Activated CD4-positive, alpha-beta memory T cell treated with anti-CD3 and anti-CD28 coated beads, Interleukin-2, amount 10 ng/mL, durations not matched to agents 7 days and 5 days (primary cell): ENCODE measurements at regions of chr15 and their contacts with region 1.

Region 1: DNA sequence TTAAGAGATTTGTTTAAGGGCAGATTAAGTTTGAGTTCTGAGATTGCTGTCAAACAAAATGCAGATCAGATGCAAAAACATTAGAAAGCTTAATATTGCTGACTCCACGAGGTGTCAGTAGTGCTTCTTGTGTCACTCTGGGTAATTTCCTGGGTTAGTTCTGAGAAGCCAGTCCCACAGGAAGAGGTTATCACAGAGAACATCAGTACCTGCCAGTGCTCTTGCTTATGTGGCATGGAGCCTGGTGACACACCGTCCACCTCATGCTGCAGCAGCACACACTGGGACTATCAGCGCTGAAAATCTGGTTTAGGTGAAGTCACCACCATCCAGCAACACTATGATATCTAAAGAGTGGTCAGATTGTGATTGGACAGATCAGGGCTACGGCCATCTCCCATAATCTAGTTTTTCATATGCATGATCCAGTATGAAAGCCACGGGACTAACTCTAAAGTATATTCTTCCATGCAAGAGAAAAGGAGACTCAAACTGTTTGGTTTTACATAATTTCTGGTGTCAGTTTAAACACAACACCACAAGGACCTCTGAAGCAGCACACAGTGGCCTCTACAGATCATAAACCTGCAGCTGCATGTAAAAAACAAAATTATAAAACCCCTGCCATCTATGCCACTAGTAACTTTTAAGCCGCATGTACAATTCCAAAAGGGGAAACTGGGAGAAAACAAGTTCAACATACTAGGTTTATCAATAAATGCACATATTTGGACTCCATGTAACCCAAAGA is 36.1 kb upstream of the MYO5C start:
- DNase-seq: peak; percentile 78
- H3K4me3 Mint-ChIP-seq: peak overlapping the region; percentile 19
- H3K27ac Mint-ChIP-seq: peak overlapping the region; percentile 79
- H3K4me1 Mint-ChIP-seq: peaks cover 45% of the 10 kb centered on the region
- H3K27me3 Mint-ChIP-seq: no peaks in the 10 kb centered on the region

Region 2: DNA sequence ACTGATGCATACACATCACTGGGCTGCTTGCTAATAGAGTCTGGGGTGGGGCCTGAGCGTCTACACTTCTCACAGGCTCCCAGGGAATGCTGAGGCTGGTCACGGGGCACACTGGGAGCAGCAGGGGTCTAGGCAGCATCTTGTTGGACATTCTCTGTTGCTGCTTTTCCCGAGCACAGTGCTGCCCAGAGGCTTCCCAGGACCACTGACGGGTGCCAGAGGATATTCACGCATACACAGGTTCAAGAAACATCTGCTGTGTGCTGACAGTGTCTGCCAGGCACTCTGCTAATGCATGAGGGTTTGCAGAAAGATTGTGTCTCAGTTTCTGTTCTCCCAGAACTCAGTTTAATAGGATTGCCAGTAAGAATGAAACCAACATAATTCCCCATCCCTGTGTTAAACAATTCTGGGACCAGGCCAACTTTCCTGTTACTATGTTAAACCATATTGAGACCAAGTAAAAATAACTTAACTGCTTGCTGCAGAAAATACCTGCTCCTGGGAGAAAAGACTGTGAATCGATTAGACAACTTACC is 195.2 kb before region 1 on chr15:
- CTCF ChIA-PET with region 1: no interaction called
- POLR2A ChIA-PET with region 1: no interaction called
- DNase-seq: no peak
- H3K4me3 Mint-ChIP-seq: no peak overlapping the region
- H3K27ac Mint-ChIP-seq: no peak overlapping the region
- H3K4me1 Mint-ChIP-seq: peaks cover 20% of the 10 kb centered on the region
- H3K27me3 Mint-ChIP-seq: no peaks in the 10 kb centered on the region

Region 3: GRCh38 chr15:52261498-52262242 is 70.0 kb before region 1 on chr15:
- CTCF ChIA-PET with region 1: interaction called, 47 read pairs
- POLR2A ChIA-PET with region 1: interaction called, 7 read pairs
- DNase-seq: peak; percentile 82
- H3K4me3 Mint-ChIP-seq: no peak overlapping the region
- H3K27ac Mint-ChIP-seq: peak overlapping the region; percentile 89
- H3K4me1 Mint-ChIP-seq: peaks cover 60% of the 10 kb centered on the region
- H3K27me3 Mint-ChIP-seq: no peaks in the 10 kb centered on the region

Region 4: DNA sequence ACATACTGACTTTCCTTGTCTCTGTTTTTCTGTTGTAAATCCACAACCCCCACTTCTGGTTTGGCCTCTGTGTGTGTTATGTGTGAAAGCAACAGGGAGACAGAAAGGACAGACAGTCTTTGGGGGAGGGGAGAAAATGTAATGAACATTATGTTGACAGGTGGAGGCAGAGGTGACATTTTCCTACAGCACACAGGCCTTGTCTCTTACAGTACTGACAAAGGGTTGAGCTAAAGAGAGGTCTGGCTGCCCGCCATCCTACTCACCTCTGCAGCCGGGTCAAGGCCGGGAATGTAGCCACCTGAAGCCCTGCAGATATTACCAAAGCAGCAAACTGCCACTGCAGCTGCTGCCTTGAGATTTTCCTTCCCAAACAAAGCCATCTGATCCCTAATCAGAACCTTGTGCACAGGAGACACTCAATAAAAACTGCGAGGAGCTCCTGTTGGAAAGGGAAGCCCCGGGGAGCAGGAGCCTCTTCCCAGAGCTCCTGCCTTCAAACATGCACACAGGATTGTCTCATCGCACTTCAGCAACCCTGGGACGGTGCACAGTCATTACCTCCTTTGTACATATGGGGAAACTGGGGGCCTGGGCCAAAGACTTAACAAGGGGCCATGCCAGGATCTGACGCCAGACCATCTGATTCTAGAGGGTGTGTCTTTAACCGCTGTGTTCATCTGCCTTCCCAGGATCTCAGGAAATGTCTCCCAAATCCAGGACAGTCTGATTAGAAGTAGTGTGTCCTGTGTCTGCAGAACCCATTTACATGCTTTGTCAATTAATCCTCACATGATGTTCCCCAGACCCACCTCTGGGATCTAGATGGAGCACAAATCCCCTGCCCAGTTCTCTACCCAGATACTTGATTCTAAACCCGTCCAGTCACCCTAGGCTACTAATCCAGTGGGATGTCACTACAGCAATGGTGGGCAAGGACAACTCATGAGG is 50.3 kb before region 1 on chr15:
- CTCF ChIA-PET with region 1: no interaction called
- POLR2A ChIA-PET with region 1: no interaction called
- DNase-seq: no peak
- H3K4me3 Mint-ChIP-seq: no peak overlapping the region
- H3K27ac Mint-ChIP-seq: no peak overlapping the region
- H3K4me1 Mint-ChIP-seq: peaks cover 4% of the 10 kb centered on the region
- H3K27me3 Mint-ChIP-seq: no peaks in the 10 kb centered on the region

Region 5: GRCh38 chr15:52730173-52730572 is 398.5 kb after region 1 on chr15:
- CTCF ChIA-PET with region 1: interaction called, 31 read pairs
- POLR2A ChIA-PET with region 1: interaction called, 5 read pairs
- DNase-seq: peak; percentile 60
- H3K4me3 Mint-ChIP-seq: no peak overlapping the region
- H3K27ac Mint-ChIP-seq: peak overlapping the region; percentile 50
- H3K4me1 Mint-ChIP-seq: peaks cover 51% of the 10 kb centered on the region
- H3K27me3 Mint-ChIP-seq: no peaks in the 10 kb centered on the region